MCF 10A (cell line): ENCODE measurements at regions of chr6 and their contacts with region 1.

Region 1: GRCh38 chr6:150016324-150017185 is 8.8 kb downstream of the RAET1L start:
- DNase-seq: peak; percentile 74
- H3K4me3 Mint-ChIP-seq: no peak overlapping the region
- H3K27ac Mint-ChIP-seq: no peak overlapping the region
- H3K4me1 Mint-ChIP-seq: peaks cover 13% of the 10 kb centered on the region
- H3K27me3 Mint-ChIP-seq: peaks cover 43% of the 10 kb centered on the region
- CTCF ChIP-seq: peak; percentile 65

Region 2: GRCh38 chr6:149723771-149724417 is 292.7 kb before region 1 on chr6:
- CTCF ChIA-PET with region 1: no interaction called
- POLR2A ChIA-PET with region 1: no interaction called
- intact Hi-C with region 1: loop called (anchors 10 kb)
- DNase-seq: peak; percentile 87
- H3K4me3 Mint-ChIP-seq: no peak overlapping the region
- H3K27ac Mint-ChIP-seq: no peak overlapping the region
- H3K4me1 Mint-ChIP-seq: peaks cover 6% of the 10 kb centered on the region
- H3K27me3 Mint-ChIP-seq: no peaks in the 10 kb centered on the region
- CTCF ChIP-seq: peak; percentile 82

Region 3: DNA sequence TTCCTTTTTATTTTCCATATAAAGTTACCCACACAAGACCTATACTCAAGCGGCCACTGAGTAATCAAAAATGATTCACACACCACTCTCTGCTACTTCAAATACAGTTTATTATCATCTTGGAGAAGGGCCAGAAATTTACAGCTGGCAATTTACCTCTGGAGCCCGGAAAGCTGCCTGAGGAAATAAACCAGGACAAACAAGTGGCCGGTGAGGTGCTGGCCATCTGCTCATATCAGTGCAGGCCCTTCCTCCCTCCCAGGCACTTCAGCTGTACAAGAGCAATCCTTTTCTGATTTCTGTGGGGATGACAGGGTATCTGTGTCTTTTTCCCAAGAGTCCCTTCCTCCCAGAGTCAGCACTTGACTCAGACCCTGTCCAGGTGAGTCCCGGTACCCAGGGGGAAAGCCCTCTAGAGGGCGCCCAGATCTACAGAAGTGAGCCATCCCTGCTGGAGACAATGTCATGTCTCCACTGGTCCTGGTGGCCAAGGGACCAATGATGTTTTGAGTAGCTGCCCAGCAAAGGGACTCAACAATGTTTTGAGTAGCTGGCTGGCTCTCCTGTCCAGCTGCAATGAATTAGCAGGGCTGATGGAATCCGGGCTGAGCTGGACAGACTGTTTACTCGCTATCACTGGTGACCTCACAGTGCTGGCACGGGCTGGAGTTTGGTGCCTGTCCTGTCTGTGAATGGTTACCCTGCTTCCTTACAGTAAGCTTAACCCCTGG is 176.0 kb before region 1 on chr6:
- CTCF ChIA-PET with region 1: no interaction called
- POLR2A ChIA-PET with region 1: no interaction called
- intact Hi-C with region 1: loop called (anchors 10 kb)
- DNase-seq: peak; percentile 79
- H3K4me3 Mint-ChIP-seq: no peak overlapping the region
- H3K27ac Mint-ChIP-seq: no peak overlapping the region
- H3K4me1 Mint-ChIP-seq: peaks cover 14% of the 10 kb centered on the region
- H3K27me3 Mint-ChIP-seq: no peaks in the 10 kb centered on the region
- CTCF ChIP-seq: peak; percentile 76

Region 4: DNA sequence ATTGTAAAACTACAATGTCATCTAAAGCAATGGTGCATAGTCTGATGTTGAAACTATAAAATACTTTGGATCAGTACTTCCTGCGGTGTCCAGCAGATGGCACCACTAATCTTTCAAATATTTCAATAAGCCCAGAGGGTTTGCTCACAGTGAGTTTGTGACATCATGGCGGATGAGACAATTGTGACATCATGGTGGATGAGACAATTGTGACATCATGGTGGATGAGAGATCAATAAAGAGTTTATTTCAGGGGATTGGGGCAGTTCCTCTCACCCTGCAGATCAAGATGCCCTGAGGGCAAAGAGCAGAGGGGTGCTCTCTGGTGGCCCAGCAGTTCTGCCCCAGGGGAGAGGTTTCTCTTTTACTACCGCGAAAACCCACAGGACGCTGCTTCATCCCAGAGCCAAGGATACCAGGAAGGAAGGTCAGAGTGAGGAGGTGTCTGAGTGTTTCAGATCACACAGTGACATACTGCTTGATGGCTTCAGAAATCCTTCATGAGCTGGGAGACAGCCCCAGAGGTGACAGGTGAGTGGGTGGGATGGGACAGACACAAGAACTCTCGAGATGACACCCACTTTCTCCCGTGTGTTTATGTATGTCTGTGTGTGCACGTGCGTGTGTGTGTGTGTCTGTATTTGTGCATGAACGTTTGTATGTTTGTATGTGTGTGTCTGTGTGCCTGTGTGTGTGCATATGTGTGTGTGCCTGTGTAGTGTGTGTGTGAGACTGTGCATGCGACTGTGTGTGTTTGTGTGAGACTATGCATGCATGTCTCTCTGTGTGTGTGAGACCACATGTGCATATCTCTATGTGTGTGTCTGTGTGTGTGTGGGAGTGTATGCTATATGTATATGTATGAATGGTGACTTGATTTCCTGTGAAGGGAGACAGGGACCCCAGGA is 82.1 kb before region 1 on chr6:
- CTCF ChIA-PET with region 1: interaction called, 9 read pairs
- POLR2A ChIA-PET with region 1: interaction called, 4 read pairs
- intact Hi-C with region 1: loop called (anchors 1 kb)
- DNase-seq: peak; percentile 74
- H3K4me3 Mint-ChIP-seq: no peak overlapping the region
- H3K27ac Mint-ChIP-seq: no peak overlapping the region
- H3K4me1 Mint-ChIP-seq: peaks cover 23% of the 10 kb centered on the region
- H3K27me3 Mint-ChIP-seq: peaks cover 22% of the 10 kb centered on the region
- CTCF ChIP-seq: peak; percentile 67

Region 5: DNA sequence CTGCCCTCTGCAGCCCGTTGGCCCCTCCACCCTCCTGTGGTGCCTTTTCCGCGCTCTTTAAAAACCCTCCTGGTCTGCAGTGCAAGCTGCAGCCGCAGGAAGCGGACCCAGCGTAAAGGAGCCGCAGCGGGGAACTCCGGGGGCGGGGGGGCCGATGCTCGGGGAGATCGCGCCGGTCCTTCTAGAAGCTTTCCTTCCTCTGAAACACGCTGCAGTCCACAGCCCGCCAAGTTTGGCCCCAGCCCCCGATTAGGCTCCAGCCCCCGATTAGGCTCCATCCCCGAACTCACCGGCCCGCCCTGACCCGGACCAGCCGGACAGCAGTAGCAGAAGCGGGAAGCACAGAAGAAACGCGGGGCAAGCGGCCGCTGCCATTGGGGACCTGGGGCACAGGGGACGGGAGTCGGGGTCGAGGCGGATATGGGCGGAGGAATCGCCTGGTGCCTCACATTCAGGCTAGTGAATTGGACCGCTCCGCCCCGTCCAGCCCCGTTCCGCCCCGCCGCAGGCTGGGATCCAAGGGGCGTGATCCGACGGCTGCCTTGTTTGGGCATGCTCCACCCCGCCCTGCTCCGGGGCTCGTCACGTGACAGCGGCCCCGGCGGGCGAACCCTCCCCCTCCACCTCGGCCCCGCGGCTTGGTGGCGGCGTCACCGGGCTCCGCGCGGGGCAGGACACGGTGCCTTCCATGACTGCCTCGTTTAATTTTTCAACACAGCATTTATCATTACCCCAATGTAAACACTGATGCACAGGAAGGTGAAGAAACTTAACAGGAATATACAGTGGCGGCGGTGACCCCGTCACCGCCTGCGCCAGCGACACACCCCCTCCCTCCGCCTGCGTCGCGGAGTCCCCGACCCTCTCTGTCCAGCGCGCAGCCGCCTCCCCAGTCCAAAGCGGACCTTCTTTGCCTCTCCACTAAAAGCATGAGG is 11.5 kb before region 1 on chr6:
- CTCF ChIA-PET with region 1: interaction called, 10 read pairs
- POLR2A ChIA-PET with region 1: no interaction called
- intact Hi-C with region 1: no loop called
- DNase-seq: peak; percentile 91
- H3K4me3 Mint-ChIP-seq: peak overlapping the region; percentile 80
- H3K27ac Mint-ChIP-seq: no peak overlapping the region
- H3K4me1 Mint-ChIP-seq: peaks cover 17% of the 10 kb centered on the region
- H3K27me3 Mint-ChIP-seq: peaks cover 5% of the 10 kb centered on the region
- CTCF ChIP-seq: no peak

Region 6: GRCh38 chr6:150029749-150030148 is 13.2 kb after region 1 on chr6:
- CTCF ChIA-PET with region 1: no interaction called
- POLR2A ChIA-PET with region 1: no interaction called
- intact Hi-C with region 1: no loop called
- DNase-seq: no peak
- H3K4me3 Mint-ChIP-seq: no peak overlapping the region
- H3K27ac Mint-ChIP-seq: no peak overlapping the region
- H3K4me1 Mint-ChIP-seq: peaks cover 18% of the 10 kb centered on the region
- H3K27me3 Mint-ChIP-seq: no peaks in the 10 kb centered on the region
- CTCF ChIP-seq: no peak